Naive thymus-derived CD4-positive, alpha-beta T cell (primary cell): ENCODE measurements at regions of chr10 and their contacts with region 1.

Region 1: DNA sequence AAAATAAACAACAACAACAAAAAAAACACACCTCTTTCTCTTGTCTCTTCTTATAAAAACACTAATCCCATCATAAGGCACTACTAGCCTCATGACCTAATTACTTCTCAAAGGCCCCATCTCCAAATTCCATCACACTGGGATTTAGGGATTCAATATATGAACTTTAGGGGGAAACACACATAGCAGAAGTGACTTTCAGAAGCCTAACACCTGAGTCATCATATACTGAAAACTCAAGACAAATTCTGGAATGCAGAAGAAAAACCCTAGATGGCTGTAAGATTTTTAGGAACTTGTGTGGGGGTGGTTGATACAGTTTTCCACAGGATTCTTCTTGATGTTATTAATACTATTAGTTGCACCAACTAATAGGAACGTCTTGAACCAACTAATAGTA is 33.7 kb upstream of the CSTF2T start:
- DNase-seq: no peak
- ATAC-seq: no peak
- H3K4me3 ChIP-seq: no peak overlapping the region
- H3K4me3 Mint-ChIP-seq: no peak overlapping the region
- H3K27ac ChIP-seq: no peak overlapping the region
- H3K27ac Mint-ChIP-seq: no peak overlapping the region
- H3K4me1 ChIP-seq: no peaks in the 10 kb centered on the region
- H3K4me1 Mint-ChIP-seq: no peaks in the 10 kb centered on the region
- H3K27me3 ChIP-seq: no peaks in the 10 kb centered on the region
- H3K27me3 Mint-ChIP-seq: peaks cover 0 to 12% (median 6%) of the 10 kb centered on the region in 5 donors

Region 2: GRCh38 chr10:51638737-51639136 is 94.3 kb before region 1 on chr10:
- CTCF ChIA-PET with region 1: no interaction called
- POLR2A ChIA-PET with region 1: no interaction called
- intact Hi-C with region 1: no loop called
- DNase-seq: no peak
- ATAC-seq: no peak
- H3K4me3 ChIP-seq: no peak overlapping the region
- H3K4me3 Mint-ChIP-seq: no peak overlapping the region
- H3K27ac ChIP-seq: no peak overlapping the region
- H3K27ac Mint-ChIP-seq: no peak overlapping the region
- H3K4me1 ChIP-seq: no peaks in the 10 kb centered on the region
- H3K4me1 Mint-ChIP-seq: no peaks in the 10 kb centered on the region
- H3K27me3 ChIP-seq: no peaks in the 10 kb centered on the region
- H3K27me3 Mint-ChIP-seq: peaks cover 0 to 15% (median 12%) of the 10 kb centered on the region in 5 donors

Region 3: GRCh38 chr10:51685768-51686167 is 47.3 kb before region 1 on chr10:
- CTCF ChIA-PET with region 1: no interaction called
- POLR2A ChIA-PET with region 1: no interaction called
- intact Hi-C with region 1: loop called in 1 of 2 experiments (anchors 5 kb)
- DNase-seq: no peak
- ATAC-seq: no peak
- H3K4me3 ChIP-seq: no peak overlapping the region
- H3K4me3 Mint-ChIP-seq: no peak overlapping the region
- H3K27ac ChIP-seq: no peak overlapping the region
- H3K27ac Mint-ChIP-seq: no peak overlapping the region
- H3K4me1 ChIP-seq: no peaks in the 10 kb centered on the region
- H3K4me1 Mint-ChIP-seq: peaks cover 0 to 13% (median 0%) of the 10 kb centered on the region in 7 donors
- H3K27me3 ChIP-seq: no peaks in the 10 kb centered on the region
- H3K27me3 Mint-ChIP-seq: peaks cover 4 to 19% (median 10%) of the 10 kb centered on the region in 5 donors